IMR-90 (cell line): ENCODE measurements at regions of chr17 and their contacts with region 1.

Region 1: DNA sequence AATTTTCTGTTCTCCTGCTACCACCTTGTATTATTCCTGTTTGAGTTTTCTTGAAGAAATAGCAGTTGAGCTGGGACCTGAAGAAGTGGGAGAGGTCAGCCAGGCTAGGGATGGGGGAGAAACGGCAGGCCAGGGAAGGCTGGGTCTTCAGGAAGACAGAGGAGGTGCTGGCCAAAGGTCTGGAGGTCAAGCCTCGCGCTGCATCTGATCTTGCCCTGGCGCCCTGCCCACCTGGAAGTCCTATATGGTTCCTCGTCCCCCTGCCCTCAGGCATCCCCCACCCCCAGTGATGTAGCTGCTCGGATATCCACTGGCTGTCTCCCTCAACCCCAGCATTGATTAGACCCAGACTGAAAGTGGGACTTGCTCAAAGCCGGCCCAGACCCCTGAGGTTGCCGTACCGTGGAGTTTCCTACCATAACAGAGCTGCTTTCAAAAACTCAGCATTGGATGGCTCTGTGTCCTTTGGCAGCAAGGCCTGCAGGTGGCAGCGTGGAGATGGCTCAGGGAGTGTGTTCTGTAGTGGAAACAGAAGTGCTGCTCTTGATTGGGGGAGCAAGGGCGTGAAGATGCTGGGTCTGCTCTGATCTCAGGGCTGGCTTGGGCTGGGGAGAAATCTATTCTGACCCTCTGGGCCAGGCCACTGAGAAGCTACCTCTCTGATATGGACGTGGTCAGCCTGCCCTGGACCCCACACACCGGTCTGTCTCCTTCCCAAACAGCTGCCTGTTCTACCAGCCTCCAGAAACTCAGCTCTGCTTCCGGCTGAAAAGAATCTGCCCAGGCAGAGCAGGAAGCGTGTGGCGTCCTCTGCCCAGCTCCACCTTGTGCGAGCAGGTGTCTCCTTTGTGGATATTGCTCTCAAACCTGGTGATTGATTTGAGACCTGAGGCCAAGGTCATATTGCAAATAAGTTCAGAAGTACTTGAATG is 107.0 kb upstream of the CACNG5 start:
- DNase-seq: peak; percentile 50
- ATAC-seq: peak; percentile 76
- H3K4me3 ChIP-seq: no peak overlapping the region
- H3K27ac ChIP-seq: no peak overlapping the region
- H3K4me1 ChIP-seq: peaks cover 4% of the 10 kb centered on the region; the same call in 1 of the 2 replicates
- H3K27me3 ChIP-seq: no peaks in the 10 kb centered on the region
- CTCF ChIP-seq: peak; percentile 58
- POLR2A ChIP-seq: no peak
- RAD21 ChIP-seq: peak; percentile 56

Region 2: DNA sequence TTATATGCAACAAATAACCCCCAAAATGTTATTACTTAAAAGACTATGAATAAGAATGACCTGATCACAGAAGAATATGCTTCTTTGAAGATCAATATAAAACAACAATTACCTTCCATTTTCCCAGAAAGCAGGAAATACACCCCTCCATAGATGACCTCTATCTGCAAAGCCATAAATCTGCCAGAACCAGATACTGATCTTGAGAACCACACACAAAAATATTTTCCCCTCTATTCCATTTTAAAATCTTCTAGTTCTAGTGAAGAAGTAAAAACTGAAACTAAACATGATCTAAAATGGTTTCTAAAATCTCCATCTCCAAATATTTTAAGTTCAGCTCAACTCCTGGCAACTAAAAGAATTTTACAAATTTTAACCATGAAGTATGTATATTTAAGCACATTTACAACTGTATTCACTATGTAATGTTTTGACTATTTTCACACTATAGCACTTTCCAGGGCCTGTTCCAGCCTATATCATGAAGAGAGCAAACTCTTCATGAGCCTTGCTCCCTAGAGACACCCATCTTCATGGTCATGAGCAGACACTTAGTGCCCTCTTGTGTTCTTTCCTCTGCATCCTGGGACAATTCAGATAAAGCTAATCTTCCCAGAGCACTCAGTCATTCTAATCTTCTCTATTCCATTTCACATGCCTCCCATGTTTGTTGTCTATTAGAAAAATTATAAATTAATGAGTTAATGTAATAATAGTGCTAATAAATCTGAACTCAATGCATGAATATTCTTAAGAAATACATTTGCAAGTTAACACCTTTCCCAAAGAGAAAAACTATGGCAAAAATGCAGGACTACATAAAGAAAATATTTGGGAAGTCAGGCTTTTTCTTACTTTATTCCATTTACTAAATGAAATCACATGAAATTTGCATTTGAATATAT is 430.1 kb after region 1 on chr17:
- CTCF ChIA-PET with region 1: no interaction called
- POLR2A ChIA-PET with region 1: no interaction called
- dilution Hi-C with region 1: no loop called
- in situ Hi-C with region 1: no loop called
- intact Hi-C with region 1: loop called (anchors 5 kb)
- DNase-seq: peak; percentile 57
- ATAC-seq: peak; percentile 85
- H3K4me3 ChIP-seq: no peak overlapping the region
- H3K27ac ChIP-seq: no peak overlapping the region
- H3K4me1 ChIP-seq: no peaks in the 10 kb centered on the region
- H3K27me3 ChIP-seq: no peaks in the 10 kb centered on the region
- CTCF ChIP-seq: peak; percentile 55
- POLR2A ChIP-seq: no peak
- RAD21 ChIP-seq: peak; percentile 68

Region 3: DNA sequence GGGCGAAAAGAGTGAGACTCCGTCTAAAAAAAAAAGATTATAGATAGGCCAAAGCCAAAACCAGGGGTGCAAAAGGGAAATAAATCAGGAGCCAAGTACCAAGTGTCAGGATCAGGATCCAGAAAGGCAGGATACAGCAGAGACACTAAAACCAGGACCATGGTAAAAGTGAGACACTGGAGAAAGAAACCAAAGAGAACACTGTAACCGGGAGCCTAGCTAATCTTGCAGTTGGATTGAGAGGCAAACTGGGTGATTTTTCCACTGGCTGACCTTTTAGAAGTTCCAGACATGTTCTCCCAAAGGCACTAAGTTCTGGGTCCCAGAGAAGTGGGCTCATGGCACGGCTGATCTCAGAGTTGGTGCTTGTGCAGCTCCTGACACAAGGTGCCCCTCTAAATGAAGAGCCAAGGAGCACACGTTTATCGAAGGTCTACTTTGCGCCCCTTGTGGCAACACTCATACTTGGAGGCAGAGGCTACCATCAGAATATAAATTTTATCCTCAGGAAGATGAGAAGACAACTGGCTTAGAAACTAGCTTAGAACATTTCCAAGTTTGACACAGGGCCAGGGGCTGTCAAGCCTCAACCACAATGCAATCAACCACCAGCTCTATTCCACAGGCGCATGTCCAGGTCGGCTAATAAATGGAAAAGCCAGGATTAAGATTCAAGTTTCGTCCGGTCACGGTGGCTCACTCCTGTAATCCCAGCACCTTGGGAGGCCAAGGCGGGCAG is 544.6 kb after region 1 on chr17:
- CTCF ChIA-PET with region 1: no interaction called
- POLR2A ChIA-PET with region 1: no interaction called
- dilution Hi-C with region 1: no loop called
- in situ Hi-C with region 1: no loop called
- intact Hi-C with region 1: no loop called
- DNase-seq: no peak
- ATAC-seq: no peak
- H3K4me3 ChIP-seq: no peak overlapping the region
- H3K27ac ChIP-seq: no peak overlapping the region
- H3K4me1 ChIP-seq: no peaks in the 10 kb centered on the region
- H3K27me3 ChIP-seq: no peaks in the 10 kb centered on the region
- CTCF ChIP-seq: peak; percentile 20; the same call in 1 of the 2 replicates
- POLR2A ChIP-seq: no peak
- RAD21 ChIP-seq: no peak